H1 (cell line): ENCODE measurements at regions of chr15 and their contacts with region 1.

Region 1: GRCh38 chr15:70466895-70467529 is 296.3 kb downstream of the UACA start:
- DNase-seq: peak in 1 of 2 experiments; percentile 56
- H3K4me3 ChIP-seq: no peak overlapping the region
- H3K27ac ChIP-seq: no peak overlapping the region
- H3K4me1 ChIP-seq: no peaks in the 10 kb centered on the region
- H3K27me3 ChIP-seq: no peaks in the 10 kb centered on the region
- CTCF ChIP-seq: peak; percentile 67 to 78 (median 78)
- EP300 ChIP-seq: no peak
- POLR2A ChIP-seq: no peak
- RAD21 ChIP-seq: peak; percentile 53 to 73

Region 2: GRCh38 chr15:69719527-69720240 is 747.3 kb before region 1 on chr15:
- CTCF ChIA-PET with region 1: interaction called, 11 read pairs
- POLR2A ChIA-PET with region 1: no interaction called
- DNase-seq: no peak
- H3K4me3 ChIP-seq: no peak overlapping the region
- H3K27ac ChIP-seq: no peak overlapping the region
- H3K4me1 ChIP-seq: peaks cover 0 to 3% (median 1%) of the 10 kb centered on the region in 4 experiments; a peak in 1 of 7 replicates
- H3K27me3 ChIP-seq: no peaks in the 10 kb centered on the region
- CTCF ChIP-seq: no peak
- EP300 ChIP-seq: no peak
- POLR2A ChIP-seq: no peak
- RAD21 ChIP-seq: no peak

Region 3: DNA sequence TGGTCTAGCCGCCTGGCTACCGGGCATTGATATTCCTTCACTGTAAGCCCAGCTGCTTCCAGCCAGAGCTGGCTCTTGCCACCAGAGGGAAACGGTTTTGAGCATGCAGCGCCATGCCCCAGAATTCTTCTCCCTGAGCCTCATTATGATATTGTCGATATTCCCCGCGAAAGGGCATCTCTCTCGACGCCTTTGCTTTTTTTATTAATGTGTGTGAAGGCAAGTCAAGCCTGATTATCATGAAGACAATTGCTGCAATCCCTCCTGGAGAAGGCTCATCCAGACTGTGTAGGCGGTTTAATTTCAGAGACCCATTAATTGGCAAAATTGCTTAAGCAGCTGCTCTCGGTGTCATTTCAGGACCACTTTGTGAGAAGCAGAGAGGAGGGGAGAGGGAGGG is 48.1 kb before region 1 on chr15:
- CTCF ChIA-PET with region 1: interaction called, 11 read pairs
- POLR2A ChIA-PET with region 1: no interaction called
- DNase-seq: no peak
- H3K4me3 ChIP-seq: no peak overlapping the region
- H3K27ac ChIP-seq: no peak overlapping the region
- H3K4me1 ChIP-seq: peaks cover 0 to 4% (median 1%) of the 10 kb centered on the region in 4 experiments; a peak in 1 of 7 replicates
- H3K27me3 ChIP-seq: no peaks in the 10 kb centered on the region
- CTCF ChIP-seq: no peak
- EP300 ChIP-seq: no peak
- POLR2A ChIP-seq: no peak
- RAD21 ChIP-seq: no peak

Region 4: GRCh38 chr15:70437882-70438331 is 29.1 kb before region 1 on chr15:
- CTCF ChIA-PET with region 1: interaction called, 22 read pairs
- POLR2A ChIA-PET with region 1: no interaction called
- DNase-seq: no peak
- H3K4me3 ChIP-seq: no peak overlapping the region
- H3K27ac ChIP-seq: no peak overlapping the region
- H3K4me1 ChIP-seq: peaks cover 0 to 8% (median 4%) of the 10 kb centered on the region in 4 experiments; a peak in 2 of 7 replicates
- H3K27me3 ChIP-seq: no peaks in the 10 kb centered on the region; a peak in 1 of 7 replicates
- CTCF ChIP-seq: peak; percentile 9 to 33 (median 32); a peak in 3 of 4 replicates
- EP300 ChIP-seq: no peak
- POLR2A ChIP-seq: no peak
- RAD21 ChIP-seq: peak; percentile 42 to 57

Region 5: DNA sequence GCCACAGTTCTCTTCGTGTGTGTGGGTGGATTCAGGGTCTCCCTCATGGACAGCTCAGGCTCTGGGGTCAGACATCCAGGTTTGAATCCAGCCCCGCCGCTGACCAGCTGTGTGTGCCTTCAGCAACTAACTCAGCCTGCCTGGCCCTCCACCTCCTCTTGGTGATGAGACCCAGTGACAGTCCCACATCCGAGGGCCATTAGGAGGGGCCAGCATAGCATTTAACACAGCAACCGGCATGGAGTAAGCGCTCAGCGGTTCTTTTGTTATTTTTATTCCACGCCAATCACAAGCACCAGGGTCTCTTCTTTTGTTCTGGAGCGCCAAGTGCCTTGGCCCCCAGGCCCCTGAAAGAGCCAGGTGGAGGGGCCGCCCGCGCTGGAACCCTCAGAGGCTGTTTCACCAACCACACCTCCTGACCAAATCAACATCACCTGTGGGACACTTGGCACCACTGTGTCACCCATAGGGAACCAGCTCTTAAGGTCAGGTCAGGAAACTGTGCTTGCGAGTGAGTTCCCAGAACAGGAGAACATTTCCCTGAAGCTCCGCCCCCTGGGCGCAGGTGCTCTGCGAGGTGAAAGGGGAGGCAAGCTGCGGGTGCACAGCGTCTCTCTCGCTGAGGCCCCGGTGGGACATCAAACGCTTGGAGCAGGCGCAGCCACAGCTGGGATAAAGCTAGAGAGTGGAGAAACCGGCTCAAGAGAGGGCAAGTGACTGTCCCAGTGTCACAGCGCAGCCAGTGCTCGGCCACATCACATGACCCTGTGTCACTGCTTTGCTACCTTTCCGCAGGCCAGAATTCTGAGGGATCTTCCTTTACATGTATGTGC is 15.0 kb before region 1 on chr15:
- CTCF ChIA-PET with region 1: interaction called, 24 read pairs
- POLR2A ChIA-PET with region 1: interaction called, 3 read pairs
- DNase-seq: peak in 1 of 2 experiments; percentile 81
- H3K4me3 ChIP-seq: peak overlapping the region; percentile 2 to 51 (median 24); a peak in 7 of 8 replicates
- H3K27ac ChIP-seq: no peak overlapping the region
- H3K4me1 ChIP-seq: peaks cover 6 to 16% (median 11%) of the 10 kb centered on the region in 4 experiments
- H3K27me3 ChIP-seq: peaks cover 0 to 5% (median 0%) of the 10 kb centered on the region in 4 experiments; a peak in 4 of 7 replicates
- CTCF ChIP-seq: no peak
- EP300 ChIP-seq: no peak
- POLR2A ChIP-seq: no peak
- RAD21 ChIP-seq: no peak

Region 6: DNA sequence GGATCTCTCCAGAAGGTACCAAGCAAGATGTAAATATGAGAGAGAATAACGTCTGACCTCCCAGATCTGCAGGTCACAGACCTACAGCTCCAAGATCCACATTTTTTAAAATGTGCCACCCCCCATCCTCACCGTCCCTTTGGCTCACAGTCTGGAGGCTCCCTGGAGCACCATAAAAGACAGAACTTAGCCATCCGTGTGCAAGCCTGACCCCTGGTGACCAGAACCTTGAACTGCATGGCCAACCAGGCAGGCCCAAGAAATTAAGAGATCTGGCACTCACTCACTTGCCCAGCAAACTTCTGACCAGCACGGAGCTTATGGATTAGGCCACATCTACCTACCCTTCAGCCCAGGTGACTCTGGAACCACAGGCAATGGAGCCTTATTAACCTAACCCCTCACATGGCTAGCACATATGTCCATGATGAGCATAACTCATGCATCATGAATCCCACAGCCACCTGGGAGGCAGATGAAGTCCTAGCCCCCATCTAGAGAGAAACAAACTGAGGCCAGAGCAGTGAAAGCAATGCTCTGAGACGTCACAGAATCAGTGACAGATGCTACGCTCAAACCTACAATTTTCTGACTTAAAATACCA is 21.1 kb after region 1 on chr15:
- CTCF ChIA-PET with region 1: interaction called, 81 read pairs
- POLR2A ChIA-PET with region 1: no interaction called
- DNase-seq: peak in 1 of 2 experiments; percentile 87
- H3K4me3 ChIP-seq: no peak overlapping the region
- H3K27ac ChIP-seq: no peak overlapping the region
- H3K4me1 ChIP-seq: no peaks in the 10 kb centered on the region; a peak in 1 of 7 replicates
- H3K27me3 ChIP-seq: no peaks in the 10 kb centered on the region
- CTCF ChIP-seq: peak; percentile 84 to 96 (median 87)
- EP300 ChIP-seq: no peak
- POLR2A ChIP-seq: no peak
- RAD21 ChIP-seq: peak; percentile 97 to 99

Region 7: GRCh38 chr15:70504299-70504951 is 37.4 kb after region 1 on chr15:
- CTCF ChIA-PET with region 1: interaction called, 12 read pairs
- POLR2A ChIA-PET with region 1: no interaction called
- DNase-seq: no peak
- H3K4me3 ChIP-seq: no peak overlapping the region
- H3K27ac ChIP-seq: no peak overlapping the region
- H3K4me1 ChIP-seq: peaks cover 9 to 25% (median 20%) of the 10 kb centered on the region in 4 experiments
- H3K27me3 ChIP-seq: no peaks in the 10 kb centered on the region
- CTCF ChIP-seq: no peak
- EP300 ChIP-seq: no peak
- POLR2A ChIP-seq: no peak
- RAD21 ChIP-seq: no peak

Region 8: GRCh38 chr15:70617076-70617910 is 150.3 kb after region 1 on chr15:
- CTCF ChIA-PET with region 1: no interaction called
- POLR2A ChIA-PET with region 1: no interaction called
- DNase-seq: no peak
- H3K4me3 ChIP-seq: no peak overlapping the region
- H3K27ac ChIP-seq: no peak overlapping the region
- H3K4me1 ChIP-seq: peaks cover 0 to 5% (median 3%) of the 10 kb centered on the region in 4 experiments; a peak in 3 of 7 replicates
- H3K27me3 ChIP-seq: no peaks in the 10 kb centered on the region
- CTCF ChIP-seq: no peak
- EP300 ChIP-seq: no peak
- POLR2A ChIP-seq: no peak
- RAD21 ChIP-seq: no peak